Natural killer cell (primary cell): ENCODE measurements at regions of chr12 and their contacts with region 1.

Region 1: DNA sequence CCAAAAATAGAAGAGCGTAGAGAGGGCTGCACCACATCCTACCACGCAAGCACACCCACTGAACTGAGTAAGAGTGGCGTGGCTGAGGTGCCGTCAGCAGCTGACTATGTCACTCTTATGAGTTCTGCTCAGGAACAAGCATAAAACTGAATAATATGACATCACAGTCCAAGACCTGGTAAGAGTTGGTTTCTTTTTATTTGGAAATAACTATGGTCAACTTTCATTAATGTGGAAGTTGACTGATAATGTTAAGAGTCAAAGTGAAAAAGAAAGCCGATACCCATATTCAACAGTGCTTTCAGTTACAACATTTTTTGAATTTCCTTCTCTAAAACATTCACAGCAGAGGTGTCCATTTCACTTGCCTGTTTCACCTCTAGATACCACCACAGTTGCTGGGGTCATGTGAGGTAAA is 44.6 kb downstream of the GNS start:
- DNase-seq: peak; percentile 53 to 63
- ATAC-seq: peak; percentile 81 to 88 (median 82)
- H3K4me3 ChIP-seq: no peak overlapping the region
- H3K4me3 Mint-ChIP-seq: peak overlapping the region; percentile 78
- H3K27ac ChIP-seq: peak overlapping the region; percentile 91
- H3K27ac Mint-ChIP-seq: peak overlapping the region; percentile 96 to 97
- H3K4me1 ChIP-seq: peaks cover 41% of the 10 kb centered on the region
- H3K4me1 Mint-ChIP-seq: peaks cover 52 to 61% of the 10 kb centered on the region in 2 donors
- H3K27me3 ChIP-seq: no peaks in the 10 kb centered on the region
- H3K27me3 Mint-ChIP-seq: no peaks in the 10 kb centered on the region
- CTCF ChIP-seq: no peak

Region 2: GRCh38 chr12:64494998-64495729 is 219.4 kb before region 1 on chr12:
- intact Hi-C with region 1: no loop called
- DNase-seq: no peak
- ATAC-seq: peak in 1 of 3 donors; percentile 46
- H3K4me3 ChIP-seq: no peak overlapping the region
- H3K4me3 Mint-ChIP-seq: peak overlapping the region; percentile 9
- H3K27ac ChIP-seq: no peak overlapping the region
- H3K27ac Mint-ChIP-seq: peak overlapping the region; percentile 65 to 76
- H3K4me1 ChIP-seq: no peaks in the 10 kb centered on the region
- H3K4me1 Mint-ChIP-seq: peaks cover 7 to 10% of the 10 kb centered on the region in 2 donors
- H3K27me3 ChIP-seq: no peaks in the 10 kb centered on the region
- H3K27me3 Mint-ChIP-seq: no peaks in the 10 kb centered on the region
- CTCF ChIP-seq: no peak

Region 3: DNA sequence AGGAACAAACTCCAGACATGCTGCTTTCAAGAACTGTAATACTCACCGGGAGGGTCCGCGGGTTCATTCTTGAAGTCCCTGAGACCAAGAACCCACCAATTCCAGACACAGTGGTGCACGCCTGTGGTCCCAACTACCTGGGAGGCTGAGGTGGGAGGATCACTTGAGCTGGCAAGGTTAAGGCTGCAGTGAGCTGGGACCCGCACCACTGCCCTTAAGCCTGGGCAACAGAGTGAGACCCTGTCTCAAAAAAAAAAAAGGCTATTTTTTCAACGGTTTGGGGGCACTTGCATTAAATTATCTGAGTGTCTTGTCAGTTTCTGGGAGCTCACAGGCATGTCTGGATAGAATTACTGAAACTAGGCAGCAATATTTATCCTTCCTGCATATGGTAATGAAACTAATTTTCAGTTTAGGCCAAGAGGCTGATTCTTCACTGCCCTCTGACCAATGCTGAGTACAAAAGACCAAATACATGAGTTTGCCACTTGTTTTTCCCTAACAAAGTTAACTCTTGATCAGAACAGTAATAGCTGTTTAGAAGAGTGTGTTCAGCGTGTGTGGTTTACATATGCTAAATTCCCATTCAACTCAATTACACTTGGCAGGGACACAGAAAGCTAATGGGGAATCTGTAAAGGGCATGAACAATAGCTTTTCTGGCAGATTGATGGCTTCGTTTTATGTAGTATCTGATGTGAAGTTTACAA is 170.0 kb before region 1 on chr12:
- intact Hi-C with region 1: loop called (anchors 5 kb)
- DNase-seq: no peak
- ATAC-seq: no peak
- H3K4me3 ChIP-seq: no peak overlapping the region
- H3K4me3 Mint-ChIP-seq: no peak overlapping the region
- H3K27ac ChIP-seq: no peak overlapping the region
- H3K27ac Mint-ChIP-seq: no peak overlapping the region
- H3K4me1 ChIP-seq: no peaks in the 10 kb centered on the region
- H3K4me1 Mint-ChIP-seq: peaks cover 2% of the 10 kb centered on the region in 2 donors
- H3K27me3 ChIP-seq: peaks cover 2% of the 10 kb centered on the region
- H3K27me3 Mint-ChIP-seq: no peaks in the 10 kb centered on the region
- CTCF ChIP-seq: no peak

Region 4: GRCh38 chr12:64560396-64561304 is 153.9 kb before region 1 on chr12:
- intact Hi-C with region 1: no loop called
- DNase-seq: no peak
- ATAC-seq: no peak
- H3K4me3 ChIP-seq: no peak overlapping the region
- H3K4me3 Mint-ChIP-seq: no peak overlapping the region
- H3K27ac ChIP-seq: no peak overlapping the region
- H3K27ac Mint-ChIP-seq: no peak overlapping the region
- H3K4me1 ChIP-seq: no peaks in the 10 kb centered on the region
- H3K4me1 Mint-ChIP-seq: no peaks in the 10 kb centered on the region
- H3K27me3 ChIP-seq: no peaks in the 10 kb centered on the region
- H3K27me3 Mint-ChIP-seq: peaks cover 0 to 8% of the 10 kb centered on the region in 2 donors
- CTCF ChIP-seq: no peak

Region 5: GRCh38 chr12:64669270-64669842 is 45.2 kb before region 1 on chr12:
- intact Hi-C with region 1: loop called (anchors 2 kb)
- DNase-seq: peak; percentile 59 to 90
- ATAC-seq: peak; percentile 81 to 95 (median 90)
- H3K4me3 ChIP-seq: peak overlapping the region; percentile 49
- H3K4me3 Mint-ChIP-seq: peak overlapping the region; percentile 82
- H3K27ac ChIP-seq: peak overlapping the region; percentile 97
- H3K27ac Mint-ChIP-seq: peak overlapping the region; percentile 91 to 93
- H3K4me1 ChIP-seq: peaks cover 85% of the 10 kb centered on the region
- H3K4me1 Mint-ChIP-seq: peaks cover 85 to 90% of the 10 kb centered on the region in 2 donors
- H3K27me3 ChIP-seq: no peaks in the 10 kb centered on the region
- H3K27me3 Mint-ChIP-seq: no peaks in the 10 kb centered on the region
- CTCF ChIP-seq: no peak

Region 6: DNA sequence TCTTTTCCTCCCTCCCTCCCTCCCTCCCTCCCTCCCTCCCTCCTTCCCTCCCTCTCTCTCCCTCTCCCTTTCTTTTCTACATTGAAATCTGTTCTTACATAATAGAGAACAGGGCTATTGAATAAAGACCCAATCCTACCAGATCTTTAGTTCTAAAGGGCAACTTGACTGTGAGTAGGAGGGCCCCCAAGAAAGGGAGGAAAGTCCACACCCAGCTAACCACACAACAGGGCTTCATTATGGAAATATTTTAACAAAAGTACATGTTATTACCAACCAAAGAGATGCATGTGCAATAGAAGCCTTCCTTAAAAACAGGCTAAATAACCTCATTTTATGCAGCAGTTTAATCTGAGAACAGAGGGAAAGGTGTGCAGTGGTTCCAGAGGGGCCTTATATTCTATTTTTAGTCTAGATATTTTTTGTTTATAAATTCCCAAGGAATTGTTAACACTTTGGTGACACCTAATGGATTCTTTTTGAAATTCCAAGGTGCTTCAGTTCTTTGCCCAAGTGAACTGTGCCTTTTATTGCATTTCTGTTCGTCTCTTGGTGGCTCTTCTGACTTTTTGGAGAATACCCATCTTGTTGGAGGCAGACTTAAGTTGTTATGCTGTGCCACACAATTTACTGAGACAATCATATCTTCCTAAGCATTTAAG is 18.3 kb before region 1 on chr12:
- intact Hi-C with region 1: loop called (anchors 1 kb)
- DNase-seq: peak in 1 of 2 donors; percentile 54
- ATAC-seq: no peak
- H3K4me3 ChIP-seq: no peak overlapping the region
- H3K4me3 Mint-ChIP-seq: peak overlapping the region; percentile 42
- H3K27ac ChIP-seq: no peak overlapping the region
- H3K27ac Mint-ChIP-seq: peak overlapping the region; percentile 58 to 70
- H3K4me1 ChIP-seq: peaks cover 35% of the 10 kb centered on the region
- H3K4me1 Mint-ChIP-seq: peaks cover 58 to 67% of the 10 kb centered on the region in 2 donors
- H3K27me3 ChIP-seq: no peaks in the 10 kb centered on the region
- H3K27me3 Mint-ChIP-seq: no peaks in the 10 kb centered on the region
- CTCF ChIP-seq: no peak

Region 7: GRCh38 chr12:64747695-64748094 is 33.1 kb after region 1 on chr12:
- intact Hi-C with region 1: no loop called
- DNase-seq: no peak
- ATAC-seq: no peak
- H3K4me3 ChIP-seq: no peak overlapping the region
- H3K4me3 Mint-ChIP-seq: no peak overlapping the region
- H3K27ac ChIP-seq: no peak overlapping the region
- H3K27ac Mint-ChIP-seq: no peak overlapping the region
- H3K4me1 ChIP-seq: no peaks in the 10 kb centered on the region
- H3K4me1 Mint-ChIP-seq: no peaks in the 10 kb centered on the region
- H3K27me3 ChIP-seq: no peaks in the 10 kb centered on the region
- H3K27me3 Mint-ChIP-seq: no peaks in the 10 kb centered on the region
- CTCF ChIP-seq: no peak

Region 8: GRCh38 chr12:64759035-64759901 is 44.7 kb after region 1 on chr12 and contains the start of gene GNS:
- intact Hi-C with region 1: loop called (anchors 1 kb)
- DNase-seq: peak; percentile 94 to 98
- ATAC-seq: peak; percentile 82 to 96 (median 83)
- H3K4me3 ChIP-seq: peak within 1 kb of the TSS; percentile 91
- H3K4me3 Mint-ChIP-seq: peak within 1 kb of the TSS; percentile 97
- H3K27ac ChIP-seq: peak within 1 kb of the TSS; percentile 71
- H3K27ac Mint-ChIP-seq: peak within 1 kb of the TSS; percentile 79 to 95
- H3K4me1 ChIP-seq: peaks cover 26% of the 10 kb centered on the region
- H3K4me1 Mint-ChIP-seq: peaks cover 50 to 58% of the 10 kb centered on the region in 2 donors
- H3K27me3 ChIP-seq: no peaks in the 10 kb centered on the region
- H3K27me3 Mint-ChIP-seq: no peaks in the 10 kb centered on the region
- CTCF ChIP-seq: no peak
- total RNA-seq, gene GNS: 51.9 to 73.9 (median 59.7) TPM

Region 9: GRCh38 chr12:64840949-64841717 is 126.6 kb after region 1 on chr12:
- intact Hi-C with region 1: no loop called
- DNase-seq: no peak
- ATAC-seq: no peak
- H3K4me3 ChIP-seq: no peak overlapping the region
- H3K4me3 Mint-ChIP-seq: no peak overlapping the region
- H3K27ac ChIP-seq: no peak overlapping the region
- H3K27ac Mint-ChIP-seq: no peak overlapping the region
- H3K4me1 ChIP-seq: no peaks in the 10 kb centered on the region
- H3K4me1 Mint-ChIP-seq: no peaks in the 10 kb centered on the region
- H3K27me3 ChIP-seq: no peaks in the 10 kb centered on the region
- H3K27me3 Mint-ChIP-seq: no peaks in the 10 kb centered on the region
- CTCF ChIP-seq: no peak